CD8-positive, alpha-beta memory T cell (primary cell): ENCODE measurements at regions of chr19 and their contacts with region 1.

Region 1: DNA sequence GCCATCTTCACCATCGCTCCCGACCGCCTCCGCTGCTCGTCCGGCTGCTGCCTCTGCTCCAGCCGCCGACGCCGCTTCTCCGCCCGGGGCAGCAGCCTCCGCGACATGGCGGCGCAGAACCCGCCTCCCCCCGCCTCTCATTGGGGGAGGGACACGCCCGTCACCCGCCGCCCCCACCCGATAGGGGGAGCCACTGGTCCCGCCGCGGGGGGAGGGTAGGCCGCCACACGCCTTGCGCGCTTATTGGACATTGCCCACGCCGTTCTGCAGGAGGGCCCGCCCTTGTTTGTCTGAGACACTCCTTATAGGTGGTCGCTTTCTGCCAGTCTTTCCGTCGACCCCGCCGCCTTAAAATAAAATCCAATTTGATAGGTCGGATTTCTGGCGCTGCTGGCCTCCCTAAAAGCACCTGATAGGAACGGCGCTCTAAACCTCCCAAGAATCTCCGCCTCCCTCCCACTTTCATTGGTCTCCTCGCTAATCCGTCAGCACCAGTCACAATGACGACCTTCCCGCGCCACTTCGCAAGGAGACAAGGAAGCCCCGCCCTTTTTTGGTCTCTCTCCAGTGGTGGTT is at the start of gene HNRNPL:
- DNase-seq: peak; percentile 98 to 100 (median 100)
- H3K4me3 ChIP-seq: peak within 1 kb of the TSS; percentile 94
- H3K4me3 Mint-ChIP-seq: peak within 1 kb of the TSS; percentile 60 to 97 (median 94)
- H3K27ac ChIP-seq: peak within 1 kb of the TSS; percentile 97
- H3K27ac Mint-ChIP-seq: peak within 1 kb of the TSS; percentile 78 to 100 (median 98)
- H3K4me1 ChIP-seq: peaks cover 58% of the 10 kb centered on the region
- H3K4me1 Mint-ChIP-seq: peaks cover 57 to 67% (median 64%) of the 10 kb centered on the region in 3 donors
- H3K27me3 ChIP-seq: no peaks in the 10 kb centered on the region
- H3K27me3 Mint-ChIP-seq: peaks cover 0 to 15% of the 10 kb centered on the region in 2 donors
- total RNA-seq, gene HNRNPL: 656 to 679 TPM

Region 2: GRCh38 chr19:38831142-38831605 is 18.8 kb before region 1 on chr19:
- CTCF ChIA-PET with region 1: interaction called, 4 read pairs
- POLR2A ChIA-PET with region 1: interaction called, 48 read pairs
- DNase-seq: peak in 2 of 5 donors; percentile 13 to 58
- H3K4me3 ChIP-seq: peak overlapping the region; percentile 90
- H3K4me3 Mint-ChIP-seq: peak overlapping the region; percentile 85 to 96 (median 93)
- H3K27ac ChIP-seq: peak overlapping the region; percentile 89
- H3K27ac Mint-ChIP-seq: peak overlapping the region; percentile 83 to 98 (median 97)
- H3K4me1 ChIP-seq: peaks cover 17% of the 10 kb centered on the region
- H3K4me1 Mint-ChIP-seq: peaks cover 25 to 54% (median 44%) of the 10 kb centered on the region in 3 donors
- H3K27me3 ChIP-seq: no peaks in the 10 kb centered on the region
- H3K27me3 Mint-ChIP-seq: no peaks in the 10 kb centered on the region

Region 3: GRCh38 chr19:38862321-38863059 is 12.5 kb after region 1 on chr19:
- CTCF ChIA-PET with region 1: interaction called, 10 read pairs
- POLR2A ChIA-PET with region 1: interaction called, 59 read pairs
- DNase-seq: no peak
- H3K4me3 ChIP-seq: no peak overlapping the region
- H3K4me3 Mint-ChIP-seq: peak overlapping the region in 2 of 7 donors; percentile 24 to 34
- H3K27ac ChIP-seq: peak overlapping the region; percentile 2
- H3K27ac Mint-ChIP-seq: peak overlapping the region in 5 of 8 donors; percentile 10 to 94 (median 32)
- H3K4me1 ChIP-seq: peaks cover 24% of the 10 kb centered on the region
- H3K4me1 Mint-ChIP-seq: peaks cover 33 to 43% (median 38%) of the 10 kb centered on the region in 3 donors
- H3K27me3 ChIP-seq: no peaks in the 10 kb centered on the region
- H3K27me3 Mint-ChIP-seq: no peaks in the 10 kb centered on the region

Region 4: DNA sequence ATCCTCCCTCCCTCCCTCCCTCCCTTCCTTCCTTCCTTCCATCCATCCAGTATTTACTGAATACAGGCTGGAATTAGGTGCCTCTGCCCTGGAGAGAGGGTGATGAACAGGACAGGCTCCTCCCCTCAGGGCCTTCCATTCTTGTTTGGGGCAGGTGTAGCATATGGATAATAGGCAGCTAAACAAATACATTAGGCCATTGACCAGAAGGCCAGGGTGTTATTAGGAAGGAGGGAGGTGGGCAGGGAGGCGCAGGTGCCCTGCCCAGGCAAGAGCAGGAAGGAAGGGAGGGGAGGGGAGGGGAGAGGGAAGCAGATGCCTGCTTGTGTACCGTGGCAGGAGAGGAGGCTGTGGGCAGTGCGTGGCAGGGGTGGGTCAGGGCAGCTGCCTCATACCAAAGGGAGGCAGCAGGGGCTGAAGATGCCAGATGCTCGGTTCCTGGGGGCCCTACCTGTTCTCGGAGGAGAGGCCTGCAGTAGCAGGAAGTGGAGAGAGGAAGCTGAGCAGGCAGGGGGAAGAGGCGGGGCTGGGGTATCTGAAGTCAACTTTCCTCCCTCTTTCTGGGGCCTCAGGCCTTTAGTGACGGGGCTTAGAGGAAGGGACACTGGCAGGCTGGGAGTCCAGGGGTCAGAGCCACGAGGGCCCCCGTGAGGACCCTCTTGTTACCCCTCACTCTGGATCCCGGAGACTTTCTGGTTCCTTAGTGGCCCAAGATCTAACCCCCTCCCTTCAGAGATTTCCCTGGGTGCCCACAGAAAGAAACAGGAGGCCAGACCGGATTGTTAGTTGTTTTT is 28.0 kb after region 1 on chr19 and contains the start of gene RINL:
- CTCF ChIA-PET with region 1: interaction called, 10 read pairs
- POLR2A ChIA-PET with region 1: interaction called, 17 read pairs
- DNase-seq: peak; percentile 48 to 82 (median 66)
- H3K4me3 ChIP-seq: peak within 1 kb of the TSS; percentile 83
- H3K4me3 Mint-ChIP-seq: peak within 1 kb of the TSS; percentile 75 to 94 (median 90)
- H3K27ac ChIP-seq: peak within 1 kb of the TSS; percentile 92
- H3K27ac Mint-ChIP-seq: peak within 1 kb of the TSS; percentile 95 to 99 (median 96)
- H3K4me1 ChIP-seq: peaks cover 41% of the 10 kb centered on the region
- H3K4me1 Mint-ChIP-seq: peaks cover 24 to 46% (median 37%) of the 10 kb centered on the region in 3 donors
- H3K27me3 ChIP-seq: no peaks in the 10 kb centered on the region
- H3K27me3 Mint-ChIP-seq: no peaks in the 10 kb centered on the region
- total RNA-seq, gene RINL: 82.3 to 85.4 TPM